Left ventricle myocardium inferior (tissue), 1 donor: ENCODE measurements at regions of chr2 and their contacts with region 1.

Region 1: DNA sequence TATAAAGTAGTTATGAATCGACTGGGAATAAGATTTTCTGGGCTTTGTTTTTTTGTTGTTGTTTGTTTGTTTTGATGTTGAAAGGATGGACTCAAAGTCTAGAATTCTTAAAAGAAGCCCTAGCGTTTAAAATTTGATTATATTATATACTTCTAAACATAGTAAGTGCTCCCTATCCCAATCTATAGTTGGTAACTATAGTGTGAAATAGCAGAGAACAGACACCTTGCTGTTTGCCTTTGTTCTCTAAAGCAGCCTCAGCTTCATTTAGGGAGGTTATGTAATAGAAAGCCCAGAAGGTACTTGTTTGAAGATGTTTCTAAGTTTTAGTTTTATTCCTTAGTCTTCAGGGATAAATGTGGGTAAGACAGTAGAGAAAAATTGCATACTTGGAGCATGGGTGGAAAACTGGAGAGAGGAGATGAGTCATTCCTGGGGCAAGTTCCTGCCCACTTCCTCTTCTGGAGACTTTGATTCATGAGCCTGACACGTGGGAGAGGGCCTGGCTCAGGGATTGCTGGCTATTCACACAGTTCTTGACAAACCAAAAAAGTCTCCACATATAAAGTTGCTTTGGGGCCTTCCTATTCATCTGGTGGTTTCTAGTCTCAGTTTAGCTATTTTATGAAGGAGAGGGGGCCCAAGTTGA is 131.9 kb downstream of the MYO1B start:
- DNase-seq: peak; percentile 50
- H3K4me3 ChIP-seq: no peak overlapping the region
- H3K27ac ChIP-seq: peak overlapping the region; percentile 65
- H3K4me1 ChIP-seq: peaks cover 26% of the 10 kb centered on the region
- H3K27me3 ChIP-seq: no peaks in the 10 kb centered on the region
- CTCF ChIP-seq: no peak

Region 2: GRCh38 chr2:191245046-191245868 is 131.8 kb before region 1 on chr2 and contains the start of gene MYO1B:
- intact Hi-C with region 1: loop called (anchors 10 kb)
- DNase-seq: peak; percentile 80
- H3K4me3 ChIP-seq: peak within 1 kb of the TSS; percentile 92
- H3K27ac ChIP-seq: peak within 1 kb of the TSS; percentile 92
- H3K4me1 ChIP-seq: peaks cover 55% of the 10 kb centered on the region
- H3K27me3 ChIP-seq: no peaks in the 10 kb centered on the region
- CTCF ChIP-seq: peak; percentile 72
- total RNA-seq, gene MYO1B: 16.2 TPM

Region 3: DNA sequence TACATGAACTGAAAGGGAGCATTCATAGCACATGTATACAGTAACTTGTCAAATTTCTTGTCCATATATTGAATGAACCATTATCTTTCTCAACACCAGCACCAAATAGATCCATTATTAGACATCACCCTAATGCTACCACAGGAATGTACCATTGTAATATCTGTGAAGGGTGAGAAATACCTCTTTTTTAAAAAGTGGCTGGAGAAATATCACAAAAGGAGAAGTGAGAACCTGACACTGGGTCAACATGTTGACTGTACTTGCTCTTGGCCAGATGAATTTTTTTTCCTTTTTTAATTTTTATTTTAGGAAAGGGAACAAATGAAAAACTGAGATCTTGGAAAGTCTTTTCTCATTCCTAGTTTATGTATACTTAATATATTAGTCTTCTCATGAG is 406.3 kb after region 1 on chr2:
- intact Hi-C with region 1: no loop called
- DNase-seq: no peak
- H3K4me3 ChIP-seq: no peak overlapping the region
- H3K27ac ChIP-seq: no peak overlapping the region
- H3K4me1 ChIP-seq: no peaks in the 10 kb centered on the region
- H3K27me3 ChIP-seq: no peaks in the 10 kb centered on the region
- CTCF ChIP-seq: no peak